MCF 10A (cell line): ENCODE measurements at regions of chr15 and their contacts with region 1.

Region 1: GRCh38 chr15:57751177-57751800 is 44.8 kb downstream of the POLR2M start:
- DNase-seq: peak; percentile 51
- H3K4me3 Mint-ChIP-seq: no peak overlapping the region
- H3K27ac Mint-ChIP-seq: no peak overlapping the region
- H3K4me1 Mint-ChIP-seq: no peaks in the 10 kb centered on the region
- H3K27me3 Mint-ChIP-seq: no peaks in the 10 kb centered on the region
- CTCF ChIP-seq: peak; percentile 59

Region 2: GRCh38 chr15:57595011-57595866 is 156.1 kb before region 1 on chr15:
- CTCF ChIA-PET with region 1: no interaction called
- POLR2A ChIA-PET with region 1: no interaction called
- intact Hi-C with region 1: no loop called
- DNase-seq: no peak
- H3K4me3 Mint-ChIP-seq: no peak overlapping the region
- H3K27ac Mint-ChIP-seq: no peak overlapping the region
- H3K4me1 Mint-ChIP-seq: peaks cover 14% of the 10 kb centered on the region
- H3K27me3 Mint-ChIP-seq: no peaks in the 10 kb centered on the region
- CTCF ChIP-seq: no peak

Region 3: DNA sequence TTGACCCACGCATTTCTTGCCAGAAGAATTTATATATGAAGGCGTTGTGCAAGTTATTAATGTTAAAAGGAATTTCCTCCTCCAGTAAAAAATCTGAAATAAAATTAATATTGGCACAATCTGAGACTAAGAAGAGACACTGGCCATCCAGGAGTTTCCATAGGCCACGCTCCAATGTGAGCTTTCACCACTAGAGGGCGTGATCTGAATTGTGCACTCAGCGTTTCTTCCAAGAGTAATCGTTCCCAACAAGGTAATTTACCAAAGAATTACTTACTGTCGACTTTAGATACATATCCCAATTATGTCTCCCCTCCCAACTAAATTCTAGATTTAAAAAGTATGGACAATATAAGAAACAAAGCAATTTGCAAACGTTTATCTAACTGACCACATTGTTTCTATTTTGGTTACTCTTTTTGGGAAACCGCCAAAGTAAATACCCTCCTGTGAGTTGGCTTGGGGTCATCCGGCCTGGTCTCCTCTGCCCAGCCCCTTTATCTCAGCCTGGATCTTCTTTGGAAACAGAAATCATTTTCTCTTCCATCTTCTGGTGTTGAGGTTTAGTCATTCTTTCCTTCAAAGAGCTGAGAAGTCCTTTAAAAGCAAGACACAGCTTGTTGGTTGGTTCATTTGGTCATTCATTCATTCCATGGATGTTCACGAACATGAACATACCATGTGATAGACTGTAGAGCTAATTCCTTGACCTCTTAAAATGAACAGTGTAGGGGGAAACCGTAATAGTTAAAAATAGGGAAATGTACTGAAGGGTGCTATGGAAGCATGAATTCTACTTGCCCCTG is 18.6 kb before region 1 on chr15:
- CTCF ChIA-PET with region 1: interaction called, 36 read pairs
- POLR2A ChIA-PET with region 1: no interaction called
- intact Hi-C with region 1: no loop called
- DNase-seq: peak; percentile 71
- H3K4me3 Mint-ChIP-seq: no peak overlapping the region
- H3K27ac Mint-ChIP-seq: no peak overlapping the region
- H3K4me1 Mint-ChIP-seq: peaks cover 6% of the 10 kb centered on the region
- H3K27me3 Mint-ChIP-seq: no peaks in the 10 kb centered on the region
- CTCF ChIP-seq: peak; percentile 80

Region 4: GRCh38 chr15:57849317-57849716 is 98.0 kb after region 1 on chr15:
- CTCF ChIA-PET with region 1: interaction called, 10 read pairs
- POLR2A ChIA-PET with region 1: interaction called, 3 read pairs
- intact Hi-C with region 1: no loop called
- DNase-seq: no peak
- H3K4me3 Mint-ChIP-seq: no peak overlapping the region
- H3K27ac Mint-ChIP-seq: no peak overlapping the region
- H3K4me1 Mint-ChIP-seq: no peaks in the 10 kb centered on the region
- H3K27me3 Mint-ChIP-seq: peaks cover 10% of the 10 kb centered on the region
- CTCF ChIP-seq: no peak

Region 5: DNA sequence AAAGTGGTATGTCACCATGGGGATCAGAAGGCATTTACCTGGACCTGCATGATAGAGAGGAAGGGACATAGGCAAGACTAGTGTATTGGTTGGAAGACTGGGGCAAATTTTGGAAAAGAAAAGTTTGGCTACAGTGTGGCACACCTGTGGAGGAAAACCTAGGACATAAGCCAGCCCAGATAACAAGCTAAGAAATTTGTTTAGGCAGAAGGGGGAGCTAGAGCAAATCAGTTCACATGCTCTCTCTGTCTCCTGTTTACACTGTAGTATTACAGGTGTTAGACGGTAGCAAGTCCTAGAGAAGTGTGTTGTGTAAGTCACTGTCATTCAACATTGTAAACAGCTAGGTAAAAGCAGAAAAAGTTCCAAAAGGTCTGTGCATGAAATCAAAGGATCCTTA is 326.1 kb after region 1 on chr15:
- CTCF ChIA-PET with region 1: interaction called, 224 read pairs
- POLR2A ChIA-PET with region 1: interaction called, 3 read pairs
- intact Hi-C with region 1: no loop called
- DNase-seq: peak; percentile 36
- H3K4me3 Mint-ChIP-seq: no peak overlapping the region
- H3K27ac Mint-ChIP-seq: no peak overlapping the region
- H3K4me1 Mint-ChIP-seq: peaks cover 8% of the 10 kb centered on the region
- H3K27me3 Mint-ChIP-seq: no peaks in the 10 kb centered on the region
- CTCF ChIP-seq: peak; percentile 49